ENCODE measurements at regions of chr20 and their contacts with region 1.

Region 1: DNA sequence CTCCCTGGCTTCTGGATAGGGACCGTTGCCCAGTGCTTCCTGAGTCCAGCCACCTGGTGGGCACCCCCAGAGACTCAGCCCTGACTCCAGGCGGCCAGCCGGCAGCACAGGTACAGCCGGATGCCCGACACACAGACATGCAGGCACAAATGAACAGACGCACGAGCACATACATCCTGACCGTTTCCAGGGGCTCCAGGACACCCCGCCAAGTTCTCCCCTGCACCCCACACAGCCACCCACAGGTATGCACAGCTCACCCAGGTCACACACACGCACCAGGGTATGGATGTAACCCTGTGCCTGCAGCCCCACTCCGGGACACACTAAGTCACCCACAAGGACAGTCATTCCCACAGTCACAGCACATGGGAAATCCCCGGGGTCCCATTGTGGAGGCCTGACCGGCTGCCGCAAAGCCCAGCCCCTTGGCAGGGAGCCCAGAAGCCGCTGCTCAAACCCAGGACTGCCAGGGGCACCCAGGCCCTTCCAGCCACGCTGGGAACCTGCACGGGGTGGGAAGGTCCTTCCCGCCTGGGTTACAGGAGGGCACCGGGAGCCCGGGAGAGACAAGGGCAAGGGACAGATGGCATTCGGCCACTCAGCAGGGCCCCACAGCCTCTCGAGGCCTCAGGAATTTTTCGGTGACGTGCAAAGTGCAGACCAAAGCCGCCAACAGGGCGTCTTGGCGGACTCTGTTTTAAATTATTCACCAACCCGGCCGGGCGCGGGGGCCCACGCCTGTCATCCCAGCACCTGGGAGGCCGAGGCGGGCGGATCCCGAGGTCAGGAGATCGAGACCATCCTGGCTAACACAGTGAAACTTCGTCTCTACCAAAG is 10.6 kb upstream of the KCNQ2 start:
- DNase-seq: no peak
- ATAC-seq: no peak
- H3K4me3 Mint-ChIP-seq: no peak overlapping the region
- H3K27ac Mint-ChIP-seq: no peak overlapping the region
- H3K4me1 Mint-ChIP-seq: peaks cover 20% of the 10 kb centered on the region
- H3K27me3 Mint-ChIP-seq: peaks cover 5% of the 10 kb centered on the region; the same call in 1 of the 2 replicates
- CTCF ChIP-seq: no peak

Region 2: GRCh38 chr20:63457737-63458136 is 25.3 kb before region 1 on chr20:
- CTCF ChIA-PET with region 1: no interaction called
- POLR2A ChIA-PET with region 1: no interaction called
- DNase-seq: no peak
- ATAC-seq: no peak
- H3K4me3 Mint-ChIP-seq: no peak overlapping the region
- H3K27ac Mint-ChIP-seq: no peak overlapping the region; the same call in 1 of the 2 replicates
- H3K4me1 Mint-ChIP-seq: peaks cover 32% of the 10 kb centered on the region
- H3K27me3 Mint-ChIP-seq: no peaks in the 10 kb centered on the region
- CTCF ChIP-seq: no peak

Region 3: DNA sequence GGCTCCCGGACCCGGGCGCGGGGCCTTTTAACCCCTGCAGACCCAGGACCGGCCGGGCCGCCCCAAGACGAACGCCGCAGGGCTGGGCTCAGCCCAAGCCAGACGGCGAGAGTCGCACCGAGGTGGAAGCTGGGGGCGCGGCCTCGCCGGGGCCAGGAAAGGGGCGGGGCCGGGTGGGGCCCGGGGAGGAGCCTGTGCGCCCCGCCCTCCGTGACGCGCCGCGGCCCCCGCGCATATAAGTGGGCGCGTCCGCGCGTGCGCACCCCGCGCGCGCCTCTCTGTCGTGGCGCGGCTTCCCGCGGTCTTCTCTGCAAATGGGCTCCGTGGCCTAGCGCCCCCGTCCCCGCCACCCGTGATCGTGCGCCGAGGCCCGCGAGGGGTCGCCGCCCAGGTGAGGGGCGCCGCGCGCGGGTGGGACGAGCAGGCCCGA is 37.4 kb after region 1 on chr20 and contains the start of gene PPDPF:
- CTCF ChIA-PET with region 1: interaction called, 10 read pairs
- POLR2A ChIA-PET with region 1: no interaction called
- DNase-seq: peak; percentile 78
- ATAC-seq: peak; percentile 72
- H3K4me3 Mint-ChIP-seq: peak within 1 kb of the TSS; percentile 88
- H3K27ac Mint-ChIP-seq: peak within 1 kb of the TSS; percentile 79
- H3K4me1 Mint-ChIP-seq: peaks cover 14% of the 10 kb centered on the region
- H3K27me3 Mint-ChIP-seq: peaks cover 9% of the 10 kb centered on the region; the same call in 1 of the 2 replicates
- CTCF ChIP-seq: no peak
- total RNA-seq, gene PPDPF: 170 to 210 TPM (median 205 TPM) in 3 replicates